ENCODE measurements at regions of chr3 and their contacts with region 1.

Region 1: GRCh38 chr3:25782938-25783660 is at the start of gene NGLY1:
- DNase-seq: peak; percentile 78 to 88 (median 83)
- ATAC-seq: peak; percentile 95
- H3K4me3 ChIP-seq: peak within 1 kb of the TSS; percentile 73
- H3K4me3 Mint-ChIP-seq: peak within 1 kb of the TSS; percentile 85 to 95 (median 92)
- H3K27ac ChIP-seq: peak within 1 kb of the TSS; percentile 89
- H3K27ac Mint-ChIP-seq: peak within 1 kb of the TSS; percentile 78 to 93 (median 87)
- H3K4me1 ChIP-seq: peaks cover 19 to 28% of the 10 kb centered on the region in 2 donors
- H3K4me1 Mint-ChIP-seq: peaks cover 25 to 61% (median 46%) of the 10 kb centered on the region in 7 donors
- H3K27me3 ChIP-seq: no peaks in the 10 kb centered on the region
- H3K27me3 Mint-ChIP-seq: no peaks in the 10 kb centered on the region
- total RNA-seq, gene NGLY1: 66.1 to 84.1 (median 70.4) TPM

Region 2: DNA sequence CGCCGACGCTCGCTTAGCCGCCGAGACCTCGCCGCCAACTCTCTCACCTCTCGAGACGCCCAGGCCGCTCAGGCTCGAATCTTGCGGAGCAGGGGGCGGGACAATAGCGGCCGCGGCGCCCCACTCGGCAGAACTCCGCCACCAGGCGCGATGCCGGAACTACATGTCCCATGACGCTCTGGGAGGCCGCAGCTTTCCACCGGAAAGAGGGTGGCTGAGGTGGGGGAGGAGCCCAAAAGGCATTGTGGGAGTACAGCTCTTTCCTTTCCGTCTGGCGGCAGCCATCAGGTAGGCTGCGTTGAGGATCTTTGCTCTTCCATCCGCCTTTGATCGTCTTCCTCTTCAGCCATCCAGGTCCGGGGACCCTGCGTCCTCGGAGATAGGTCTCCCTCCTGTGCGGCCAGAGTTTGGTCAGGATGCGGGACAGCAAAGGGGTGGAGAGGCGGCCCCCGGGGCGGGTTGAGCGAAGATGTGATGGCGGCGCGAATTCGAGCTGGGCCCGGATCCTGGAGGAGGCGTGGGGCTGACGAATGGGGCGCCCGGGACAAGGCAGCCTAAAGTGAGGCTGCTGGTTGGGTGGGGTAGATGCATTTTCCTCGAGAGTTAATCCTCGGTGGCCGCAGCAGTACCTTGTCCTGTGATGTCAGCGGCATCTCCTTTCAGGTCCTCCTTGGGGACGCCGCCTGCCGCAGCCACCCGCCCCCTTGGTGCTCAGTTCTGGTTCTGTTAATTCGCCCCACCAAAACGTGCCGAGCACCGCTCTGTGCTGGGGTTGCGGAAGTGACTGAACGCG is 1866.0 kb before region 1 on chr3 and contains the starts of genes NKIRAS1 and RPL15:
- CTCF ChIA-PET with region 1: no interaction called
- POLR2A ChIA-PET with region 1: no interaction called
- intact Hi-C with region 1: loop called (anchors 2 to 10 kb)
- DNase-seq: peak; percentile 90 to 98 (median 97)
- ATAC-seq: peak; percentile 97
- H3K4me3 ChIP-seq: peak within 1 kb of the TSS; percentile 88
- H3K4me3 Mint-ChIP-seq: peak within 1 kb of the TSS; percentile 92 to 100 (median 98)
- H3K27ac ChIP-seq: peak within 1 kb of the TSS; percentile 83
- H3K27ac Mint-ChIP-seq: peak within 1 kb of the TSS; percentile 97 to 99 (median 98)
- H3K4me1 ChIP-seq: peaks cover 14 to 18% of the 10 kb centered on the region in 2 donors
- H3K4me1 Mint-ChIP-seq: peaks cover 33 to 52% (median 49%) of the 10 kb centered on the region in 7 donors
- H3K27me3 ChIP-seq: no peaks in the 10 kb centered on the region
- H3K27me3 Mint-ChIP-seq: peaks cover 0 to 4% (median 0%) of the 10 kb centered on the region in 5 donors
- total RNA-seq, gene NKIRAS1: 2.2 to 6.4 (median 3.2) TPM
- total RNA-seq, gene RPL15: 1,489 to 2,250 (median 2,129) TPM

Region 3: DNA sequence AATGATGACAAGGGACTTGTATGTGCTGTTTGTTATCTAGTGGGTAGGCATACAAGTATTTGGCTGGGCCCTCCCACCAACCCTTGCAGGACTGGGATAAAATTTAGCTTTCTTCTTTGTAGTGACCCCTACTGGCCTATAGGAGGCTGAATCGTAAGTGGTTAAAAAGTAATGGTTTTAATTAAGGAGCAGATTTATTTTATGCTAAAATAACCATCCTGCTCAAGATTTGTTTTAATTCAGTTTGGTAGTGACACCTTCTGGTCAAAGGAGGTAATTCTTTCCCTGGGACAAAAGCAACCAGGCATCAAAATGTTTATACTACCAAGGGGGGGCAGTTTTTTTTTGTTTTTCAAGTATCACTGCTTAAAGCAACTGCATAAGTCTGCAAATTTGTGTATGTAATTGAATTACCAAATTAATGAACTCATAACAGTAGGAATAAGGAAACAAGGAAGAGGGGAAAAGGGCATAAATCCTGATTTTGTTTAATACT is 189.0 kb before region 1 on chr3:
- CTCF ChIA-PET with region 1: no interaction called
- POLR2A ChIA-PET with region 1: no interaction called
- intact Hi-C with region 1: loop called in 1 of 2 experiments (anchors 1 kb)
- DNase-seq: peak in 7 of 9 donors; percentile 16 to 42 (median 25)
- ATAC-seq: peak; percentile 73
- H3K4me3 ChIP-seq: no peak overlapping the region
- H3K4me3 Mint-ChIP-seq: no peak overlapping the region
- H3K27ac ChIP-seq: no peak overlapping the region
- H3K27ac Mint-ChIP-seq: peak overlapping the region in 7 of 9 donors; percentile 3 to 71 (median 40)
- H3K4me1 ChIP-seq: no peaks in the 10 kb centered on the region
- H3K4me1 Mint-ChIP-seq: peaks cover 0 to 9% (median 6%) of the 10 kb centered on the region in 7 donors
- H3K27me3 ChIP-seq: no peaks in the 10 kb centered on the region
- H3K27me3 Mint-ChIP-seq: no peaks in the 10 kb centered on the region

Region 4: DNA sequence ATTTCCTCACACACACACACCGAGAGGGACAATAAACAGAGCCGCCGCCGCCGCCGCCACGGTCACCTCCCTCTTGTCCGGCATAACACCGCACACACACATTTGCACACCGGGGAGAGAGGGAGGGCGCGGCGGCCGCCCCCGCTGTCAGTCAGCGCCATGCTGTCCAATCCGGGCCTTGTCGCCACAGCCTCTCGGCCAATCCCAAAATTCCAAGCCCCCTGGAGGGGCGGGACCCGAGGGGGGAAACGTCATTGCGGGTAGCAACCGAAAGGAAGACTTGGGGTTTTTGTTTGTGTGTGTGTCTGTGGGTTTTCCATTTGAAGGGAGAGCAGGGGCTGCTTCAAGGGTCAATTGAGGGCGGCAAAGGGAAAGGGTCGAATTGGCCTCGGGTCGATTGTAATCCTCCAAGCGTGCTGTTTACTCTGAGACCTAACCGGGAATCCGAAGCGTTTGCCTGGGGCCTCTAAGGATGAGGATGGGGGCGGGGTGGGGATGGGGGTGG is 118.2 kb before region 1 on chr3 and contains the start of gene TOP2B:
- CTCF ChIA-PET with region 1: interaction called, 4 read pairs
- POLR2A ChIA-PET with region 1: interaction called, 11 read pairs
- intact Hi-C with region 1: loop called (anchors 1 kb)
- DNase-seq: peak; percentile 87 to 96 (median 95)
- ATAC-seq: peak; percentile 96
- H3K4me3 ChIP-seq: peak within 1 kb of the TSS; percentile 63
- H3K4me3 Mint-ChIP-seq: peak within 1 kb of the TSS; percentile 89 to 100 (median 99)
- H3K27ac ChIP-seq: peak within 1 kb of the TSS; percentile 95
- H3K27ac Mint-ChIP-seq: peak within 1 kb of the TSS; percentile 97 to 100 (median 99)
- H3K4me1 ChIP-seq: peaks cover 11 to 34% of the 10 kb centered on the region in 2 donors
- H3K4me1 Mint-ChIP-seq: peaks cover 20 to 57% (median 50%) of the 10 kb centered on the region in 7 donors
- H3K27me3 ChIP-seq: no peaks in the 10 kb centered on the region
- H3K27me3 Mint-ChIP-seq: peaks cover 0 to 4% (median 0%) of the 10 kb centered on the region in 5 donors
- total RNA-seq, gene TOP2B: 109 to 190 (median 127) TPM

Region 5: DNA sequence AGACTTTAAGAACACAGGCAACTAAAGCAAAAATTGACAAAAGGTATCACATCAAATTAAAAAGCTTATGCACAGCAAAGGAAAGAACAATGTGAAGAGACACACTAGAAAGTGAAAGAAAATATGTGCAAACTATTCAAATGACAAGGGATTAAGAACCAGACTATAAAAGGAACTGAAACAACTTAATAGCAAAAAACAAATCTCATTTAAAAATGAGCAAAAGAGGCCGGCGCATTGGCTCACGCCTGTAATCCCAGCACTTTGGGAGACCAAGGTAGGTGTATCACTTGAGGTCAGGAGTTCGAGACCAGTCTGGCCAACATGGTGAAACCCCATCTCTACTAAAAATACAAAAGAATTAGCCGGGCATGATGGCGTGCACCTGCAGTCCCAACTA is 14.2 kb before region 1 on chr3:
- CTCF ChIA-PET with region 1: no interaction called
- POLR2A ChIA-PET with region 1: interaction called, 11 read pairs
- intact Hi-C with region 1: loop called in 1 of 2 experiments (anchors 2 kb)
- DNase-seq: no peak
- ATAC-seq: no peak
- H3K4me3 ChIP-seq: no peak overlapping the region
- H3K4me3 Mint-ChIP-seq: no peak overlapping the region
- H3K27ac ChIP-seq: no peak overlapping the region
- H3K27ac Mint-ChIP-seq: peak overlapping the region in 3 of 9 donors; percentile 14 to 50 (median 45)
- H3K4me1 ChIP-seq: no peaks in the 10 kb centered on the region
- H3K4me1 Mint-ChIP-seq: peaks cover 9 to 49% (median 34%) of the 10 kb centered on the region in 7 donors
- H3K27me3 ChIP-seq: no peaks in the 10 kb centered on the region
- H3K27me3 Mint-ChIP-seq: no peaks in the 10 kb centered on the region

Region 6: DNA sequence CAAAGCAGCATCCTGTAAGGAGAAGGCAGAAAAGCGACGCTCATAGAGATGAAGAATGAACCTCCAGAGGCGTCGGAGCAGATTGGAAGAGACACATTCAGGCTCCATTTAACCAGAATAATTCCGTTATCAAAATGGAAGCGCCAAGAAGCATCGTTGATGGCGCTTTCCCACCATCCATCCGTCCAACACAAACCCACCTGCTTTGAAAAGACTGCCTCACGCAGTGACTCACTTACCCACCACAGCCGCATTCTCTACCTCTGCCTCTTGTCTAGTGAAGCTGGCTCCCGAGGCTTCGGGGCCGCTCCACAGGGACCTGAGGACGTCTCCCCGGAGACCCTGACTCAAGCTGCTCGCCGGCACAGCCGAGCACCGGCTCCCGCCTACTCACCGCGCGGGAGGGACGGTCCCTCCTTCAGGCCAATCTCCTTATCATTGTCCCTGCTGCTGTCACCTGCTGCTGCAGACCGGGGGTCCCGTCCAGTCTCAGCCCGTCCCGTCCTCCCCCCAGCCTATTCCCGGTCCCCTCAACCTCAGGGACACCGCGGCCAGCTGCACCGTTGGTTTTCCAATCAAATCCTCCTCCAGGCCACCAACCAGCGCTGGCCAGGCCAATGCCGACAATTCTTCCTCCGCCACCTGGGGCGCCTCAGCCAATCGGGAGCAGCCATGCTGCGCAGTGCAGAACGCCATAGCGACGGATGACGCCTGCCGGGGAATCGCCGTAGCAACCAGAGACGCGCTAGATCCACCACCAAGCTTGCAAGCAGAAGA is 1585.9 kb after region 1 on chr3 and contains the start of gene NEK10:
- CTCF ChIA-PET with region 1: no interaction called
- POLR2A ChIA-PET with region 1: no interaction called
- intact Hi-C with region 1: loop called in 1 of 2 experiments (anchors 5 kb)
- DNase-seq: peak; percentile 86 to 94 (median 91)
- ATAC-seq: peak; percentile 100
- H3K4me3 ChIP-seq: peak within 1 kb of the TSS; percentile 96
- H3K4me3 Mint-ChIP-seq: peak within 1 kb of the TSS; percentile 81 to 96 (median 93)
- H3K27ac ChIP-seq: peak within 1 kb of the TSS; percentile 11
- H3K27ac Mint-ChIP-seq: peak within 1 kb of the TSS; percentile 26 to 91 (median 85)
- H3K4me1 ChIP-seq: peaks cover 5 to 9% of the 10 kb centered on the region in 2 donors
- H3K4me1 Mint-ChIP-seq: peaks cover 7 to 18% (median 14%) of the 10 kb centered on the region in 7 donors
- H3K27me3 ChIP-seq: no peaks in the 10 kb centered on the region
- H3K27me3 Mint-ChIP-seq: peaks cover 0 to 4% (median 0%) of the 10 kb centered on the region in 5 donors
- total RNA-seq, gene NEK10: 0.64 to 2.0 (median 0.95) TPM

Measured in naive thymus-derived CD4-positive, alpha-beta T cell (primary cell).